Activated CD8-positive, alpha-beta T cell treated with anti-CD3 and anti-CD28 coated beads, Interleukin-2, amount 10 ng/mL, durations not matched to agents 7 days and 5 days (primary cell): ENCODE measurements at regions of chr19 and their contacts with region 1.

Region 1: GRCh38 chr19:13861732-13862531 is 15.0 kb upstream of the NANOS3 start:
- DNase-seq: peak; percentile 92
- ATAC-seq: peak; percentile 90
- H3K4me3 Mint-ChIP-seq: peak overlapping the region; percentile 87
- H3K27ac Mint-ChIP-seq: peak overlapping the region; percentile 88
- H3K4me1 Mint-ChIP-seq: peaks cover 50% of the 10 kb centered on the region
- H3K27me3 Mint-ChIP-seq: peaks cover 20% of the 10 kb centered on the region

Region 2: DNA sequence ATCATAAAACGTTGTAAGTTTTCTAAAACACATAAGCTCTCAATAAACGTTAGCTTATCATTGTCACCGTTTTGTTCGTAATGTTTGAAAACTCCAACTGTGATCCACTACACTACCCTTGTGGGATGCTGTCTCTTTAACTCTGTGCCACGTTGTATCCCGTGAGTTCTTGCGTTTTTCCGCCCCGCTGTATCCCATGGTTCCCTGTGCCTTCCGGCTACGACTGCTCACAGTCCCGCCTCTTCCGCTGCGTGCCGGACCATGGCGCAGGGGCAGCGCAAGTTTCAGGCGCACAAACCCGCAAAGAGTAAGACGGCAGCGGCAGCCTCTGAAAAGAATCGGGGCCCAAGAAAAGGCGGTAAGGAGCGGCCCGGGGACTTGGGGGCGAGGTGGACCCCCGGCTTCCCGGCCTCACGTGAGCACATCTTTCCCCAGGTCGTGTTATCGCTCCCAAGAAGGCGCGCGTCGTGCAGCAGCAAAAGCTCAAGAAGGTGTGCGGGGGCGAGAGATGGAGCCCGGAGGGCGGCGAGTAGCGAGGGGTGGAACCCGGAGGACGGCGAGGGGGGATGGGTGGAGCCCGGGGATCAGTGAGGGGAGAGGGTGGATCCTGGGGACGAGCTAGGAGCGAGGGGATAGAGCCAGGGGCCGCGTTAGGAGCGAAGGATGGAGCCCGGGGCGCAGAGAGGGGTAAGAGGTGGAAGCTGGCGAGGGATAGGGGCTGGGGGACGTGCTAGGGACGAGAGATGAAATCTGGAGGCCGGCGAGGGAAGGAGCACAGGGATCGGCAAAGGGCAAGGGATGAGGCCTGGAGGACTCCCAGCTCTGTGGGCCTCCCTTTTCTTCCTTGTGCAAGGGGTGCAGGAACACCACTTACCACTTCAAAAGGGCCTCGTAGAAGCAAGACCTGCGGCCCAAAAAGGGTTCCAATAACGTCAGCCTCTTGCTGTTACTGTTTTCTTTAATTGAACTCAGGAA is 87.4 kb before region 1 on chr19 and contains the start of gene C19orf53:
- CTCF ChIA-PET with region 1: interaction called, 21 read pairs
- POLR2A ChIA-PET with region 1: interaction called, 13 read pairs
- DNase-seq: peak; percentile 95
- ATAC-seq: peak; percentile 98
- H3K4me3 Mint-ChIP-seq: peak within 1 kb of the TSS; percentile 97
- H3K27ac Mint-ChIP-seq: peak within 1 kb of the TSS; percentile 95
- H3K4me1 Mint-ChIP-seq: peaks cover 26% of the 10 kb centered on the region
- H3K27me3 Mint-ChIP-seq: no peaks in the 10 kb centered on the region
- total RNA-seq, gene C19orf53: 112 to 114 TPM

Region 3: DNA sequence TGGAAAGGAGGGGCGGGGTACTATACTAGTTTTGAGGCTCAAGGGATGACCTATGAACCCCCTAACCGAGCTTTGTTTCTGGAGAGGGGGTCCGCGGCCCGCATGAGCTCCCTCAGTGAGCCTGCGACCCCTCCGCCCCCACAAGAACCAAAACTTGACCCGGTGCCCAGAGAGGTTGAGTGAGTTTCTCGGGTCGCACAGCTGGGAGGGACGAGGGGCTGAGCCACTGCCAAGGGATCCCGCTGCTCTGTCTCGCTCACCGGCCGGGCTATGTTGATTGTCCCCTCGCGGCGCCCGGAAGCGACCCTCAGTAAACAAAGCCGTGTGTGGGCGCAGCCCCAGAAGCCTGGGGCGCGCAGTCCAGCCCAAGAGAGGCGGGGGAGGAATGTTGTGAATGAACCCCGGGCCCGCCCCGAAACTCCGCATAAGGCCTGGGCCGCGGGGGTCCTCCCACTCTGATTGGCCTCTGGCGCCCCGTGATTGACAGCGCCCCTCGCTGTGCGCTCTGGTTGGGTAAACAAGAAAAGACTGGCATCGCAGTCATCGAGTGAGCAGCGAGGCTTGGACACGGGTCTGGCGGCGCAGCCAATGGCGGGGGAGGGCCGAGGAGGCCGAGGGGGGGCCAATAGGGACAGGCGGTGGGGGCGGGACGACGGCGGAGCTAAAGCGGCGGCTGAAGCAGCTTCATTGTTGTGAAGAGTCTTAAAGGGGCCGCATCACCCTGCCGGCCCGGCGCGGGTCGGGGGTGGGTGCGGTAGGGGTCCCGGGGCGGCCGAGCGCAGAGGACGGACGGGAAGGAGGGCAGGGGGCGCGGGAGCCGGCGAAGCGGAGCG is 67.0 kb before region 1 on chr19 and contains the start of gene ZSWIM4:
- CTCF ChIA-PET with region 1: interaction called, 70 read pairs
- POLR2A ChIA-PET with region 1: interaction called, 27 read pairs
- DNase-seq: peak; percentile 99
- ATAC-seq: peak; percentile 99
- H3K4me3 Mint-ChIP-seq: peak within 1 kb of the TSS; percentile 100
- H3K27ac Mint-ChIP-seq: peak within 1 kb of the TSS; percentile 93
- H3K4me1 Mint-ChIP-seq: peaks cover 36% of the 10 kb centered on the region
- H3K27me3 Mint-ChIP-seq: no peaks in the 10 kb centered on the region
- total RNA-seq, gene ZSWIM4: 8.4 to 9.5 TPM

Region 4: GRCh38 chr19:13839130-13839937 is 22.6 kb before region 1 on chr19:
- CTCF ChIA-PET with region 1: interaction called, 54 read pairs
- POLR2A ChIA-PET with region 1: interaction called, 49 read pairs
- DNase-seq: peak; percentile 90
- ATAC-seq: peak; percentile 22
- H3K4me3 Mint-ChIP-seq: peak overlapping the region; percentile 89
- H3K27ac Mint-ChIP-seq: peak overlapping the region; percentile 92
- H3K4me1 Mint-ChIP-seq: peaks cover 52% of the 10 kb centered on the region
- H3K27me3 Mint-ChIP-seq: no peaks in the 10 kb centered on the region

Region 5: DNA sequence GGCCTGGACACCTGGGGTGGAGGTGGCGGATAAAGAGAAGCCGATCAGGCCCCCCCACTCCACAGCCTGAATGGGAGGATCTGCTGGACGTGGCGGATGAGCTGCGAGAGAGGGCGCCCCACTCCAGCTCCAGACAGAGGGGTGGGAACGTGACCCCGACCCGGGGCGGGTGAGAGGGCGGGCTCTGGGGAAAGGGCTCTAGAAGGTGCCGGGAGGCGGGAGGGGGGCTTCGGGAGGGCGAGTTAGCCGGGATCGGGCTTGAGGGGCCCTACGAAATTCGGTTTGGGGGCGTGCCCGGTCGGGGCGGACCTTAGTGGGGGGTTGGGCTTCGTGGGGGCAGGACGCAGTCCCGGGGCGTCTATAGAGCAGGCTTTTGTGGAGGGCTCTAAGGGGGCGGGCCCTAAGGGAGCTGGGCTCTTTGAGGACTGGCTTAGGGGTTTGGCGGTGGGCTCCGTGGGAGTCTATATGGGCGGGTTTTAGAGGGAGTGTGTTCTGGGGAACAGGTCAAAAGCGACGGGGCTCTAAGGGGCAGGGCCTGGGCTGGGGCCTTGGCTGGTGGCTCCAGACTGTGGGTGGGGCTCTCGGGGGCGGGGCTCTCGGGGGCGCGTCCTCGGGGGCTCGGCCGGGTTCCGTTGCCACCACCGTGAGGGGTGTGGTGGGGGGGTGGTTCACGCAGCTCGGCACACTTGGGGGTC is 10.9 kb after region 1 on chr19:
- CTCF ChIA-PET with region 1: interaction called, 18 read pairs
- POLR2A ChIA-PET with region 1: no interaction called
- DNase-seq: peak; percentile 64
- ATAC-seq: peak; percentile 95
- H3K4me3 Mint-ChIP-seq: peak overlapping the region; percentile 62
- H3K27ac Mint-ChIP-seq: no peak overlapping the region
- H3K4me1 Mint-ChIP-seq: peaks cover 11% of the 10 kb centered on the region
- H3K27me3 Mint-ChIP-seq: peaks cover 5% of the 10 kb centered on the region